ENCODE measurements at regions of chr21 and their contacts with region 1.

Region 1: DNA sequence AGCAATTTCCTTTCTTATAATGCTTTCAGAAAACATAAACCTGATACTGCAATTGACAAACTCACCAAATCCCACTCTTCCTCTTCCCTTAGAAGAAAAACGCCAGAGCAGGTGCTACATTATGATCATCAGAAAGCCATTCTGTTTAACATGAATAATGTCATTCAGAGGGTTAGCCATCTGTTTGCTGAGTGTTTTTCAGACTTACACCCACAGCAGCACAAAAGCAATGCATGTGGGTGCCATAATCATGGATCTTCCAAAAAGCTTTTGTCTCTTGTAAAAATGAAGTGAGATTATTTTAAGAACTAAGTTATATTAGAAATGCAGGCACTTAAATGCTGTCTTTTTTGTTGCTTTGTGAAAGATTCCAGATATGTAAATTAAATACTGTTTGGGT is 204.6 kb upstream of the TMPRSS15 start:
- DNase-seq: no peak
- ATAC-seq: no peak
- H3K4me3 ChIP-seq: no peak overlapping the region
- H3K27ac ChIP-seq: no peak overlapping the region
- H3K4me1 ChIP-seq: no peaks in the 10 kb centered on the region
- H3K27me3 ChIP-seq: no peaks in the 10 kb centered on the region

Region 2: GRCh38 chr21:18460979-18461378 is 147.2 kb before region 1 on chr21:
- intact Hi-C with region 1: no loop called
- DNase-seq: no peak
- ATAC-seq: no peak
- H3K4me3 ChIP-seq: no peak overlapping the region
- H3K27ac ChIP-seq: no peak overlapping the region
- H3K4me1 ChIP-seq: no peaks in the 10 kb centered on the region
- H3K27me3 ChIP-seq: no peaks in the 10 kb centered on the region

Region 3: DNA sequence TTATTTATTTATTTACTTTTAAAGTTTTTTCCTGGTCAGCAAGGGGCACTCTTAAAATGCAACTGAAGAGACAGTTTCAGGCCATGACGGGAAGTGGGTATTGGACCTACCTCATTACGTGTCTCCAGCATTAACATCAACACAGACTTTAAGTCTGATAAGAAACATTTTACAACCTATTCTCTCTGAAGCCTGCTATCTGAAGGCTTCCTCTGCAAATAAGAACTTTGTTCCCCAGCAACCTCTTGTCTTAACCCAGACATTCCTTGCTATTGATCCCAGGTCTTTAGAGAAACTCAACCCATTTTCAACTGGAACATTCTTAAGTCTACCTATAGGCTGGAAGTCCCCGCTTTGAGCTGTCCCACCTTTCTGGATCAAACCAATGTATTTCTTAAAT is 53.6 kb after region 1 on chr21:
- intact Hi-C with region 1: loop called in 1 of 2 experiments (anchors 10 kb)
- DNase-seq: no peak
- ATAC-seq: no peak
- H3K4me3 ChIP-seq: no peak overlapping the region
- H3K27ac ChIP-seq: no peak overlapping the region
- H3K4me1 ChIP-seq: no peaks in the 10 kb centered on the region
- H3K27me3 ChIP-seq: no peaks in the 10 kb centered on the region

Measured in aorta (tissue), 5 donors.